ENCODE measurements at regions of chr21 and their contacts with region 1.

Region 1: GRCh38 chr21:35316933-35317332 is 267.8 kb upstream of the RUNX1 start:
- DNase-seq: no peak
- ATAC-seq: peak in 1 of 3 donors; percentile 79
- H3K4me3 ChIP-seq: no peak overlapping the region
- H3K4me3 Mint-ChIP-seq: no peak overlapping the region
- H3K27ac ChIP-seq: no peak overlapping the region
- H3K27ac Mint-ChIP-seq: no peak overlapping the region
- H3K4me1 ChIP-seq: no peaks in the 10 kb centered on the region
- H3K4me1 Mint-ChIP-seq: no peaks in the 10 kb centered on the region
- H3K27me3 ChIP-seq: no peaks in the 10 kb centered on the region
- H3K27me3 Mint-ChIP-seq: peaks cover 16 to 34% of the 10 kb centered on the region in 2 donors
- CTCF ChIP-seq: no peak

Region 2: DNA sequence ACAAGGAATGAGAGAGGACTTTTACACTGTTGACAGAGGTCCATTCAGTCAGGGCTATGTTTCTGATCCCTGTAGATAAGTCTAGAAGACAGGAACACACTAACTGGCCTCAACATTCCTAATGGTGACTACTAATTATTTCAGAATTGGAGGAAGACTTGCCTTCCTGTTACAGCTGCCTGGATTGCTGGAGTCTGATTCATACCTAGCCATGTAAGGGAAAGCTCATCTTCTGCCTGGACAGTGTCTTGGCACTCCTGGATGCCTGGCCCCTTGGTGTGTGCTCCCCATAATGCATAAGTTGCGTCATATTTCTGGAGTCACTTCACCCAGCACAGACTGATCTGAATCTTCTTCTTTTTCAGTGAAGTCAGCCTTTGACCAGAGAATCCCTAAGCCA is 58.2 kb after region 1 on chr21:
- intact Hi-C with region 1: loop called (anchors 10 kb)
- DNase-seq: no peak
- ATAC-seq: no peak
- H3K4me3 ChIP-seq: no peak overlapping the region
- H3K4me3 Mint-ChIP-seq: no peak overlapping the region
- H3K27ac ChIP-seq: no peak overlapping the region
- H3K27ac Mint-ChIP-seq: no peak overlapping the region
- H3K4me1 ChIP-seq: no peaks in the 10 kb centered on the region
- H3K4me1 Mint-ChIP-seq: no peaks in the 10 kb centered on the region
- H3K27me3 ChIP-seq: no peaks in the 10 kb centered on the region
- H3K27me3 Mint-ChIP-seq: peaks cover 0 to 2% of the 10 kb centered on the region in 2 donors
- CTCF ChIP-seq: no peak

Measured in natural killer cell (primary cell).